ENCODE measurements at regions of chr12 and their contacts with region 1.

Region 1: GRCh38 chr12:57476162-57476992 is 3.3 kb downstream of the ARHGAP9 start:
- DNase-seq: peak; percentile 60 to 83 (median 72)
- H3K4me3 ChIP-seq: peak overlapping the region; percentile 71
- H3K4me3 Mint-ChIP-seq: peak overlapping the region; percentile 85 to 99 (median 98)
- H3K27ac ChIP-seq: peak overlapping the region; percentile 85
- H3K27ac Mint-ChIP-seq: peak overlapping the region; percentile 99 to 100 (median 100)
- H3K4me1 ChIP-seq: peaks cover 86% of the 10 kb centered on the region
- H3K4me1 Mint-ChIP-seq: peaks cover 79 to 92% (median 85%) of the 10 kb centered on the region in 3 donors
- H3K27me3 ChIP-seq: no peaks in the 10 kb centered on the region
- H3K27me3 Mint-ChIP-seq: peaks cover 0 to 3% of the 10 kb centered on the region in 2 donors

Region 2: DNA sequence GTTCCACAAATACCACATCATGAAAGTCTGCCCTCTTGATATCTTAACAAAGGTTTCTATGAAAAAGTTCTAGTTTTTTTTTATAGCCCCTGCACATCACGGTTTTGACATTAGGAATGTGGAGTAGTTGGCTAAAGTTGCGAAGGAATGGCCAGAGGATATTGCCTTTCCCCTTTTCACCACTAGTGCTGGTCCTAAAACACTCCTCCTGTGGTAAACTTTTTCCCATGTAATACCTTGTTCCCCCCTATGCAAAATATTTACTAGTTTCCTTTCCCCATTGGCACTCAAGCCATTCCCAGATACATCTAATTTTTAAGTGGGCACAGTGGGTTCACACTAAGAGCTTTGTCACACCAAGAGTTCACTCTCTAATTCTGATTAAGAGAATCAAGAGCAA is 78.9 kb before region 1 on chr12:
- CTCF ChIA-PET with region 1: no interaction called
- POLR2A ChIA-PET with region 1: no interaction called
- DNase-seq: no peak
- H3K4me3 ChIP-seq: no peak overlapping the region
- H3K4me3 Mint-ChIP-seq: no peak overlapping the region
- H3K27ac ChIP-seq: no peak overlapping the region
- H3K27ac Mint-ChIP-seq: peak overlapping the region in 6 of 8 donors; percentile 6 to 93 (median 57)
- H3K4me1 ChIP-seq: no peaks in the 10 kb centered on the region
- H3K4me1 Mint-ChIP-seq: peaks cover 17 to 36% (median 30%) of the 10 kb centered on the region in 3 donors
- H3K27me3 ChIP-seq: no peaks in the 10 kb centered on the region
- H3K27me3 Mint-ChIP-seq: no peaks in the 10 kb centered on the region

Region 3: DNA sequence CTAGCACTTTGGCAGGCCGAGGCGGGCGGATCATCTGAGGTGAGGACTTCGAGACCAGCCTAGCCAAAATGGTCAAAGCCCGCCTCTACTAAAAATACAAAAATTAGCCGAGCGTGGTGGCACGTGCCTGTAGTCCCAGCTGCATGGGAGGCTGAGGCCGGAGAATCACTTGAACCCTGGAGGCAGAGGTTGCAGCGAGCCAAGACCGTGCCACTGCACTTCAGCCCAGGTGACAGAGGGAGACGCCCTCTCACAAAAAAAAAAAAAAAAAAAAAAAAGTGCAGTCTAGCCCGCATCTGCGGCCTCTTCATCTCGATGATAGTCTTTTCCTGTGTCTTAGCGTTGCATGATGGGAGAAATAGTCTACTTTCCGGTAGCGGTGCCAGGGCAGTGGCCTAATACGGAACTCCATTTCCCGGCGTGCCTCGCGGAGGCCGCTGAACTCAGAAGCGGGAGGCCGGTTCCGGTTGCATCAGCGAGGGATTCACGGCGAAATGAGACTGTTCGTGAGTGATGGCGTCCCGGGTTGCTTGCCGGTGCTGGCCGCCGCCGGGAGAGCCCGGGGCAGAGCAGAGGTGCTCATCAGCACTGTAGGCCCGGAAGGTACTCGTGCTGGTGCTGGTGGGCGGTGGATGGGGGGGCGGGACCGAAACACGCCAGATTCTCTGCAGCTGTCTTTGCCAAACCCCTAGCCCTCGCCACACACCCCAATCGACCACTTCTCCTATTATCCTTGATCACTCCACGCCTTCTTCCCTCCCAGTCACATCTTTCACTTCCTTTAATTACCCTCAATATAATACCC is 11.4 kb after region 1 on chr12 and contains the start of gene MARS1:
- CTCF ChIA-PET with region 1: interaction called, 22 read pairs
- POLR2A ChIA-PET with region 1: interaction called, 4 read pairs
- DNase-seq: peak; percentile 85 to 95 (median 92)
- H3K4me3 ChIP-seq: peak within 1 kb of the TSS; percentile 86
- H3K4me3 Mint-ChIP-seq: peak within 1 kb of the TSS; percentile 93 to 99 (median 97)
- H3K27ac ChIP-seq: peak within 1 kb of the TSS; percentile 71
- H3K27ac Mint-ChIP-seq: peak within 1 kb of the TSS; percentile 80 to 99 (median 96)
- H3K4me1 ChIP-seq: peaks cover 19% of the 10 kb centered on the region
- H3K4me1 Mint-ChIP-seq: peaks cover 32 to 44% (median 37%) of the 10 kb centered on the region in 3 donors
- H3K27me3 ChIP-seq: no peaks in the 10 kb centered on the region
- H3K27me3 Mint-ChIP-seq: no peaks in the 10 kb centered on the region
- total RNA-seq, gene MARS1: 386 to 398 TPM

Region 4: DNA sequence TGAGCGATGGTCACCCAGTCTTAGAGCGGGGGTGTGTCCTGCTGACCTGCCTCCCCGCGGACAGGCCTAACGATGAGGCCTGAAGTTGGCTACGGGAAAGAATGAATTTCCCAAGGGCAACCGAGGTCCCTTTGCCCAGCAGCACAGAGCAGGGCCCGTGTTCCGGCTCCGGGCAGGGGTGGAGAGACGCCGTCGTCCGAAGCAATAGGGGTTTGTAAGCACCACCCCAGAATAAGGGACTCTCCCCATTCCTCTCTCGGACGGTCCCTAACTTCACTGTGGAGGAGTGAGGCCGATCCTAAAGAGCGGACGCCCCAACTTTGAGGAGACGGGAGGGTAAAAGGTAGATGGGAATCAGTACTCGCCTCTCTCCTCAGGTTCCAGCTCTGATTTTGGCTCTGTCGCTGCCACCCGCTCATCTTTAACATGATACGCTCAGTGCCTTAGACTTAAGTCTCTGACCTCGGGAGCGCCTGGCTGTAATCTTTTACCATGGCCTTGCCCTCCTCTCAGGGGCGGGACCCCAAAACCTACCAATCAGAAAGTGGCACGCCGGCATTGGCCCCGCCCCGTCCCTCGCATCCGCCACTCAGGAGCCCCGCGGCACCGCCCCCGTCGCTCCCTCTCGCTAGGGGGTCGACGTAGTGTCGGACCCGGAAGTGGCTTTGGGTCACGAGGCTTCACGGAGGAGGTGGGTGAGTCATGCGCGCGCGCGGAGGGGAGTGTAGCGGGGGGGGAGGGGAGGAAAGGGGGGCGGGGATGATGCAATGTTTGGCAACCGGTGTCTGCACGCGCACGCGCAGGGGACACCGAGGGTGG is 43.9 kb after region 1 on chr12 and contains the start of gene DDIT3:
- CTCF ChIA-PET with region 1: interaction called, 12 read pairs
- POLR2A ChIA-PET with region 1: interaction called, 19 read pairs
- DNase-seq: peak; percentile 99 to 100 (median 100)
- H3K4me3 ChIP-seq: peak within 1 kb of the TSS; percentile 87
- H3K4me3 Mint-ChIP-seq: peak within 1 kb of the TSS; percentile 96 to 100 (median 98)
- H3K27ac ChIP-seq: peak within 1 kb of the TSS; percentile 99
- H3K27ac Mint-ChIP-seq: peak within 1 kb of the TSS; percentile 93 to 100 (median 99)
- H3K4me1 ChIP-seq: peaks cover 54% of the 10 kb centered on the region
- H3K4me1 Mint-ChIP-seq: peaks cover 52 to 70% (median 53%) of the 10 kb centered on the region in 3 donors
- H3K27me3 ChIP-seq: no peaks in the 10 kb centered on the region
- H3K27me3 Mint-ChIP-seq: peaks cover 0 to 3% of the 10 kb centered on the region in 2 donors
- total RNA-seq, gene DDIT3: 12.7 to 13.2 TPM